ENCODE measurements at regions of chr9 and their contacts with region 1.

Region 1: DNA sequence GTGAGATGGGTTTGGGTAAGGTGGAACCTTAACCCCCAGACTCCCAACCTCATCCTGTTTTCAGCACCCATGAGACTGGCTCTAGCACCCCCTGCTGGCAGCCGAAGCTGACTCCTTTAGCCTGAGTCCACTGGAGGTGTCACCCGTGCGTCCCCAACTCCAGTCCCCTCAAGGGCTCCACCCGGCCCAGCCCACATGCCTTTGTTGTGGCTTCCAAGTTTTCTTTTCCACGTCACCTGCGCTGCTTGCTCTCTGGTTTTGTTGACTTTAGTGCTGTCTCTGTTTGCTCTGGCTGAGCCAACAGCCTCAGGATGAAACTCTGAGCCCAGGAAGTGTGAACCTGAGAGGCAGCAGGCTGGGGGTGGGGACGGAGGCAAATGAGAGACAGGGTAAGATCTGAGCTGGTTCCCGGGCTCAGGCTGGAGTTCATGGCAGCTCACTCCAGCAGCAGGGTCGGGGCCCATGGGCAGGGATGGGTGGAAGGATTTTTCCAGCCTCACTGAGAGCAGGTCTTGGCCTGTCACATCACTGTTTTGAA is 13.2 kb upstream of the AQP7 start:
- DNase-seq: peak; percentile 84
- ATAC-seq: peak; percentile 70

Region 2: DNA sequence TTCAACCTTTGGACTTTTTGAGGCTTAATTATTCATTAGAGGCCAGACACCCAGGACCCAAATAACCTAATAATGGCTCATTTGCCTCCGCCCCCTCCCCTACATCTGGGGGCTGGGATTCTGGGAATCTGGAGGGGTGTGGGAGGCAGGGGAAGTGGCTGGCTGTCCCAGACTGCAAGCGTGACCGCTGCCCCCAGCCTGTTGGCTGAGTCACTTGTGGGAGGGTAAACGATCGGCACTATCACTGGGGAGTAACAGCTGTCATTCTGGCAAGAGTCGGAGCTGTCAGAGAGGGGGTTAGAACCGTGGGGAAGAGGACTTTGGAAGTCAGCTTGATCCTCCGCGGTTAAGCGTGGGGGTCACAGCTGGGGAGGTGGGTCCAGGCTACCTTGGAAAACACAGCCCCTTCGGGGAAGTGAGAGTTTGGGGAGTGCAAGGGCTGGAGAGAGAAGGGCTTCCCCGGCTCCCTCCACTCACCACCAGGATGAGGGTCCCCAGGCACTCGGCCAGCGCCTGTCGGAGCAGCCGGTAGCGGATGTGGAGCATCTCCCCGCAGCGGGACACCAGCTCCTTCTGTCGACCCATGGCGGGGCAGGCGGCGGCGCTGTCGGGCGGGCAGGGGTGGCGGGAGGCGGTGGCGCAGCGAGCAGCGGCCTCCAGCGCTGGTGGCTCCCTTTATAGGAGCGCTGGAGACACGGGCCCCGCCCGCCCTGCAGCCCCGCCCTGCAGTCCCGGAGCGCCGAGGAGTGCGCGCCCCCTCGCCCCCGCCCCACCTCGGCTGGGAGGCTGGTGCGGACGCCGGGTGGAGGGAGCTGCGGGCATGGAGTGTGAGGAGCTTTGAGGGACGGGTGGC is 31.6 kb after region 1 on chr9 and contains the start of gene AQP3:
- intact Hi-C with region 1: loop called (anchors 5 kb)
- DNase-seq: peak; percentile 79
- ATAC-seq: peak; percentile 87
- total RNA-seq, gene AQP3: 16.3 TPM